PC-3 (cell line): ENCODE measurements at regions of chr18 and their contacts with region 1.

Region 1: GRCh38 chr18:36015629-36016028 is 43.1 kb downstream of the RMP24 start:
- DNase-seq: no peak
- ATAC-seq: no peak
- H3K4me3 ChIP-seq: no peak overlapping the region
- H3K27ac ChIP-seq: no peak overlapping the region
- H3K4me1 ChIP-seq: no peaks in the 10 kb centered on the region
- H3K27me3 ChIP-seq: no peaks in the 10 kb centered on the region
- CTCF ChIP-seq: no peak

Region 2: GRCh38 chr18:36067055-36067957 is 51.7 kb after region 1 on chr18 and contains the start of gene RPRD1A:
- CTCF ChIA-PET with region 1: no interaction called
- POLR2A ChIA-PET with region 1: no interaction called
- intact Hi-C with region 1: loop called (anchors 2 kb)
- DNase-seq: peak; percentile 75
- ATAC-seq: peak; percentile 88
- H3K4me3 ChIP-seq: peak within 1 kb of the TSS; percentile 90
- H3K27ac ChIP-seq: peak within 1 kb of the TSS; percentile 81
- H3K4me1 ChIP-seq: no peaks in the 10 kb centered on the region; the same call in 1 of the 2 replicates
- H3K27me3 ChIP-seq: no peaks in the 10 kb centered on the region
- CTCF ChIP-seq: no peak
- total RNA-seq, gene RPRD1A: 42.2 and 46.0 TPM in 2 replicates

Region 3: GRCh38 chr18:36095936-36096519 is 80.4 kb after region 1 on chr18:
- CTCF ChIA-PET with region 1: interaction called, 4 read pairs
- POLR2A ChIA-PET with region 1: no interaction called
- intact Hi-C with region 1: loop called (anchors 1 kb)
- DNase-seq: peak; percentile 48
- ATAC-seq: no peak
- H3K4me3 ChIP-seq: no peak overlapping the region
- H3K27ac ChIP-seq: no peak overlapping the region
- H3K4me1 ChIP-seq: no peaks in the 10 kb centered on the region
- H3K27me3 ChIP-seq: no peaks in the 10 kb centered on the region
- CTCF ChIP-seq: peak; percentile 56

Region 4: DNA sequence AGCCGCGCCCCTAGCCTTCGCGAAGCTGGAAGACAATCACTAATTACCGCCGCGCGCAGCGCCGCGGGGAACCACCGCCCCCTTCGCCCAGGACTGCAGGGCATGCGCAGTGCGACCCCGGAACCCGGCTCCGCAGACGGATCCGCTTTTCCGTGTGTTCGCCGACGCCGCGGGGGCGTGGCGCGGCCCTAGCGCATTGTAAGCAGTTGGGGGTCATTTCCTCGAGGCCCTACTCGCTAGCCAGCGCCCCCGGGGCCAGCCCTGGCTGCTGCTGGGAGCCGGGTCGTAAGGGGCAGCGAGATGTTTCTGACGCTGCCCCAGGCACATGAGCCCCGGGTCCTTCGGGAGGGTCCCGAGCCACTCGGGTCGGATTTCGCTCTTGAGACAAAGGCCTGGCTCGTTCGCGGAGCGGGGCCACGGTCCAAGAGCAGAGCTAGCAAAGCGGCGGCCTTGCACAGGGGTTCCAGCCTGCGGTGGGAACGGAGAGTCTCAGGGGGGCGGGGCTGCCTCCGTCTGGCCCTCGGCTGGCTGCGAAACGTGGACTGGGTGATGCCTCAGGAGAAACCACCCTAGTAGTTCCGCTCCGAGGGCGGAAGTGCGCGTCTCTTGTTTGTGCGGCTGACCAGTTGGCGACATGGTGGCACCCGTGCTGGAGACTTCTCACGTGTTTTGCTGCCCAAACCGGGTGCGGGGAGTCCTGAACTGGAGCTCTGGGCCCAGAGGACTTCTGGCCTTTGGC is 113.8 kb after region 1 on chr18 and contains the starts of genes ELP2 and SLC39A6:
- CTCF ChIA-PET with region 1: interaction called, 3 read pairs
- POLR2A ChIA-PET with region 1: no interaction called
- intact Hi-C with region 1: loop called (anchors 10 kb)
- DNase-seq: peak; percentile 79
- ATAC-seq: peak; percentile 87
- H3K4me3 ChIP-seq: peak within 1 kb of the TSS; percentile 87
- H3K27ac ChIP-seq: peak within 1 kb of the TSS; percentile 86
- H3K4me1 ChIP-seq: 0 out of 2 replicates have a peak, but pooled peaks cover 3% of the 10 kb centered on the region
- H3K27me3 ChIP-seq: no peaks in the 10 kb centered on the region
- CTCF ChIP-seq: no peak
- total RNA-seq, gene ELP2: 24.6 and 47.3 TPM in 2 replicates
- total RNA-seq, gene SLC39A6: 18.3 and 25.5 TPM in 2 replicates

Region 5: GRCh38 chr18:36284671-36285295 is 269.2 kb after region 1 on chr18:
- CTCF ChIA-PET with region 1: no interaction called
- POLR2A ChIA-PET with region 1: no interaction called
- intact Hi-C with region 1: loop called (anchors 1 kb)
- DNase-seq: peak; percentile 55
- ATAC-seq: peak; percentile 27; the same call in 1 of the 2 replicates
- H3K4me3 ChIP-seq: no peak overlapping the region
- H3K27ac ChIP-seq: no peak overlapping the region
- H3K4me1 ChIP-seq: no peaks in the 10 kb centered on the region
- H3K27me3 ChIP-seq: no peaks in the 10 kb centered on the region
- CTCF ChIP-seq: peak; percentile 74

Region 6: DNA sequence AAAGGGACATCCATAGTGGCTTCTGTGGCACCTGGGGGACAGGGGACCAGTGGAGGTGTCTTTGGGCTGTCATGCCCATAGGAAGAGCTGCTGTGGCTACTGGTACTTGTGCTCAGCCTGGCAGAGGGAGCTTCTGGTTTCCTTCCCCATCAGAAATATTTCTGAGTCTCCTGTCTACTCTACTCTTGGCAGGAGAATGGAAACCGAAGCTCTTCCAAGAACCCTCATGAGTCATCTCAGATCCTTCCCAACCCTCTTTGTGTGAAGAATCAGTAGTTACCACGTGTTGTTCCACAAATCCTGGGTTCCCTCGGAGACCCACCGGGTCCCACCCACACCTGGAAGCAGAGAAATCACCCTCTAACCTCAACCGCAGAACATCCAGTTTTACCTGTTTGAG is 516.8 kb after region 1 on chr18:
- CTCF ChIA-PET with region 1: no interaction called
- POLR2A ChIA-PET with region 1: no interaction called
- intact Hi-C with region 1: no loop called
- DNase-seq: peak; percentile 51
- ATAC-seq: peak; percentile 54
- H3K4me3 ChIP-seq: no peak overlapping the region
- H3K27ac ChIP-seq: 0 out of 2 replicates have a peak overlapping the region, but pooled peaks have one; percentile 11
- H3K4me1 ChIP-seq: peaks cover 8% of the 10 kb centered on the region
- H3K27me3 ChIP-seq: no peaks in the 10 kb centered on the region
- CTCF ChIP-seq: no peak

Region 7: GRCh38 chr18:36572135-36572856 is 556.7 kb after region 1 on chr18:
- CTCF ChIA-PET with region 1: no interaction called
- POLR2A ChIA-PET with region 1: no interaction called
- intact Hi-C with region 1: loop called (anchors 10 kb)
- DNase-seq: peak; percentile 36
- ATAC-seq: peak; percentile 75
- H3K4me3 ChIP-seq: no peak overlapping the region
- H3K27ac ChIP-seq: no peak overlapping the region
- H3K4me1 ChIP-seq: no peaks in the 10 kb centered on the region
- H3K27me3 ChIP-seq: no peaks in the 10 kb centered on the region
- CTCF ChIP-seq: peak; percentile 70